ENCODE measurements at regions of chr7 and their contacts with region 1.

Region 1: DNA sequence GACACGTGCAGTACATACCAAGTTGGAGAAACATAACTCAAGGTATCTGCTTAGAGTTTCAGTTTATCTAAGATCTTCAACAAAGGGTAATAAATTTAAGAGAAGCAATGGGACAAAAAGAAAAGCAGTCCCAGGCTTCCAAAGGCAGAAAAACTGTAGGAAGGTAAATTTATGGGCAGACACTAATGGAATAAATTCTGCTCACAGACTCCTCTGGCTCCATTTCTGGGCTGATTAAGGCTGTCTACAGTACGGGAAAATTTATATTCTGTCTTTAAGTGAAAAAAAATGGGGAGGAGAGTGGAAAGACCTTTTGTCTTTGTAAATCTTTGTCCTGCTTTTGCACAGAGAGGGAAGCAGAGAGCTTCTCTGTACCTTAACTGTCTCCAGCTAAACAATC is 587.5 kb upstream of the IGFBP3 start:
- DNase-seq: no peak
- H3K4me3 ChIP-seq: no peak overlapping the region
- H3K27ac ChIP-seq: no peak overlapping the region
- H3K4me1 ChIP-seq: no peaks in the 10 kb centered on the region
- H3K27me3 ChIP-seq: no peaks in the 10 kb centered on the region
- CTCF ChIP-seq: no peak

Region 2: DNA sequence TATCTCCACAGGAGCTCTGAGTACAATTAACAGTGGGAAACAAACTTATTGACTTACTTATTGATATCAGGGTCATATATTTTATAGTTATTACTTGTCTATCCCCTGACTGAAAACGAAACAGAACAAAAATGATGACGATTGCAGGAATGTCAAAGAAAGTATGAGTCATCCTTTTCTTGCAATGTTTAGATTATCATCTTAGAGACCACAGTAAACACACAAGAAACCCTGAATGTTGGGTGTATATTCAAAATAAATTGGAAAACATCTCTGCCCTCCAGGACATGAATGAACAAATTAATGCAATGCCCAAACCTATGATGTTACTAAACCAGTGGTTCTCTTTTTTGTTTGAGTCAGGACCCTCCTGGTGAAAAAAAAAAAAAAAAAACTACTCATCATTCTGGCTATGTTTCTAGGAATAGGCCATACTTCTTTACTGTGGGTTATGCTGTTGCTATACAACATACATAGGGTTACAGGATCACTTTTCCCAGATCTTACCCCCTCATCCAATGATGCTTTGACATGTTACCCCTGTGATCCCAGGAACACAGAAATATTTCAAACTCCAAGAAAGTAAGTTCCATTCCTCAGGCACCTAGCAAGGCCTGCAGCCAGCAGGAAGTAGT is 35.9 kb after region 1 on chr7:
- CTCF ChIA-PET with region 1: no interaction called
- POLR2A ChIA-PET with region 1: no interaction called
- intact Hi-C with region 1: no loop called
- DNase-seq: no peak
- H3K4me3 ChIP-seq: no peak overlapping the region
- H3K27ac ChIP-seq: no peak overlapping the region
- H3K4me1 ChIP-seq: no peaks in the 10 kb centered on the region
- H3K27me3 ChIP-seq: no peaks in the 10 kb centered on the region
- CTCF ChIP-seq: no peak

Region 3: GRCh38 chr7:46558482-46559193 is 50.1 kb after region 1 on chr7:
- CTCF ChIA-PET with region 1: no interaction called
- POLR2A ChIA-PET with region 1: no interaction called
- intact Hi-C with region 1: loop called (anchors 10 kb)
- DNase-seq: no peak
- H3K4me3 ChIP-seq: no peak overlapping the region
- H3K27ac ChIP-seq: no peak overlapping the region
- H3K4me1 ChIP-seq: no peaks in the 10 kb centered on the region
- H3K27me3 ChIP-seq: no peaks in the 10 kb centered on the region
- CTCF ChIP-seq: no peak